A673 (cell line): ENCODE measurements at regions of chr12 and their contacts with region 1.

Region 1: DNA sequence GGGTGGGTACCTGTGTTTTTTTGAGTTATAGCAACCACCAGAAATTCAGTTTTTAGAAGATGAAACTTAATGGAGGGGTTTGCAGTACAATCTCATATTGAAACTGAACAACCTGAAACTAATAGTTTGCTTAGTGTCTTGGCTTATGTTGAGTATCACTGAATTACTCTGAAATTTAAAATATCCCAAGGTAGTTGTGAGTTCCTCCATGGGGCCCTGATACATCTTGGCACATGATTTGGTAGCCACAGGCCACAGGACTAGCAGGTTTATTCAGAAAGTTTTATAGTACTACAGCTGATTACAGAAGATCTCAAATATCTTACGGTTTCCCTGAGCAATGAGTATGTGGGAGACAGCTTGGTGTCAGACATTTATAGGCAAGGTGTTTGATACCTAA is 10.4 kb downstream of the PTGES3 start:
- DNase-seq: no peak
- H3K4me3 ChIP-seq: no peak overlapping the region
- H3K27ac ChIP-seq: no peak overlapping the region
- H3K4me1 ChIP-seq: no peaks in the 10 kb centered on the region
- H3K27me3 ChIP-seq: no peaks in the 10 kb centered on the region
- CTCF ChIP-seq: no peak

Region 2: GRCh38 chr12:56266693-56267442 is 410.8 kb before region 1 on chr12 and contains the start of gene COQ10A:
- CTCF ChIA-PET with region 1: no interaction called
- POLR2A ChIA-PET with region 1: no interaction called
- intact Hi-C with region 1: no loop called
- DNase-seq: peak; percentile 92
- H3K4me3 ChIP-seq: peak within 1 kb of the TSS; percentile 70
- H3K27ac ChIP-seq: peak within 1 kb of the TSS; percentile 86
- H3K4me1 ChIP-seq: peaks cover 3% of the 10 kb centered on the region
- H3K27me3 ChIP-seq: no peaks in the 10 kb centered on the region
- CTCF ChIP-seq: peak; percentile 62
- total RNA-seq, gene COQ10A: 13.6 and 17.0 TPM in 2 replicates

Region 3: GRCh38 chr12:56699020-56699661 is 21.5 kb after region 1 on chr12:
- CTCF ChIA-PET with region 1: no interaction called
- POLR2A ChIA-PET with region 1: interaction called, 17 read pairs
- intact Hi-C with region 1: no loop called
- DNase-seq: no peak
- H3K4me3 ChIP-seq: no peak overlapping the region
- H3K27ac ChIP-seq: no peak overlapping the region
- H3K4me1 ChIP-seq: peaks cover 11% of the 10 kb centered on the region
- H3K27me3 ChIP-seq: no peaks in the 10 kb centered on the region
- CTCF ChIP-seq: no peak

Region 4: GRCh38 chr12:56957229-56957939 is 279.7 kb after region 1 on chr12 and contains the start of gene RDH16:
- CTCF ChIA-PET with region 1: no interaction called
- POLR2A ChIA-PET with region 1: no interaction called
- intact Hi-C with region 1: no loop called
- DNase-seq: no peak
- H3K4me3 ChIP-seq: no peak within 1 kb of the TSS
- H3K27ac ChIP-seq: no peak within 1 kb of the TSS
- H3K4me1 ChIP-seq: no peaks in the 10 kb centered on the region
- H3K27me3 ChIP-seq: no peaks in the 10 kb centered on the region
- CTCF ChIP-seq: no peak
- total RNA-seq, gene RDH16: 0.24 and 0.42 TPM in 2 replicates

Region 5: GRCh38 chr12:56979628-56980027 is 301.9 kb after region 1 on chr12:
- CTCF ChIA-PET with region 1: no interaction called
- POLR2A ChIA-PET with region 1: interaction called, 11 read pairs
- intact Hi-C with region 1: no loop called
- DNase-seq: no peak
- H3K4me3 ChIP-seq: no peak overlapping the region
- H3K27ac ChIP-seq: no peak overlapping the region
- H3K4me1 ChIP-seq: no peaks in the 10 kb centered on the region
- H3K27me3 ChIP-seq: no peaks in the 10 kb centered on the region
- CTCF ChIP-seq: no peak

Region 6: GRCh38 chr12:58269476-58269875 is 1591.8 kb after region 1 on chr12:
- CTCF ChIA-PET with region 1: interaction called, 10 read pairs
- POLR2A ChIA-PET with region 1: no interaction called
- intact Hi-C with region 1: no loop called
- DNase-seq: no peak
- H3K4me3 ChIP-seq: no peak overlapping the region
- H3K27ac ChIP-seq: no peak overlapping the region
- H3K4me1 ChIP-seq: no peaks in the 10 kb centered on the region
- H3K27me3 ChIP-seq: no peaks in the 10 kb centered on the region
- CTCF ChIP-seq: no peak